ENCODE measurements at regions of chr1 and their contacts with region 1.

Region 1: DNA sequence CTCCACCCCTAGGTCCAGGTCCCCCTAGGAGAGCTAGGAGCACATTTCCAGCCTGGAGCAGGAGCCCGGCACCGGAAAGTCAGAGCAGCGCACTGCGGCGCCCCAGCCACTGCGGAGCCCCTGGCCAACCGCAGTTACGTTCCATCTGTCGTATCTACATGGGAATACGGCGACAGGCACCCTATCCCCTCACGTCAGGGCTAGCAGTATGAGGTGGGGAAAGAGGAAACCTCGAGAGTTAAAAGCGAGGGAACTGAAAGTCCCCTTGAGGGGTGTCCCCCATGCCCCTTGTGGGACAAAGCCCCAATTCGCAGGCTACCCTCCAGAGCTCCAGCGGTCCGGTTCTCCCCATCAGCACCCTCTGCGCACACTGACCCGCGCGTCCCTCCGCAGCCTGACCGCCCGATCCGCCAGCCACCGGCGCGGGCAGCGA is 995 bp downstream of the COLGALT2 start:
- DNase-seq: no peak
- H3K4me3 ChIP-seq: peak overlapping the region; percentile 64
- CTCF ChIP-seq: no peak

Region 2: GRCh38 chr1:184025242-184025675 is 11.3 kb before region 1 on chr1:
- CTCF ChIA-PET with region 1: no interaction called
- POLR2A ChIA-PET with region 1: no interaction called
- DNase-seq: peak; percentile 76
- H3K4me3 ChIP-seq: no peak overlapping the region
- CTCF ChIP-seq: no peak

Region 3: DNA sequence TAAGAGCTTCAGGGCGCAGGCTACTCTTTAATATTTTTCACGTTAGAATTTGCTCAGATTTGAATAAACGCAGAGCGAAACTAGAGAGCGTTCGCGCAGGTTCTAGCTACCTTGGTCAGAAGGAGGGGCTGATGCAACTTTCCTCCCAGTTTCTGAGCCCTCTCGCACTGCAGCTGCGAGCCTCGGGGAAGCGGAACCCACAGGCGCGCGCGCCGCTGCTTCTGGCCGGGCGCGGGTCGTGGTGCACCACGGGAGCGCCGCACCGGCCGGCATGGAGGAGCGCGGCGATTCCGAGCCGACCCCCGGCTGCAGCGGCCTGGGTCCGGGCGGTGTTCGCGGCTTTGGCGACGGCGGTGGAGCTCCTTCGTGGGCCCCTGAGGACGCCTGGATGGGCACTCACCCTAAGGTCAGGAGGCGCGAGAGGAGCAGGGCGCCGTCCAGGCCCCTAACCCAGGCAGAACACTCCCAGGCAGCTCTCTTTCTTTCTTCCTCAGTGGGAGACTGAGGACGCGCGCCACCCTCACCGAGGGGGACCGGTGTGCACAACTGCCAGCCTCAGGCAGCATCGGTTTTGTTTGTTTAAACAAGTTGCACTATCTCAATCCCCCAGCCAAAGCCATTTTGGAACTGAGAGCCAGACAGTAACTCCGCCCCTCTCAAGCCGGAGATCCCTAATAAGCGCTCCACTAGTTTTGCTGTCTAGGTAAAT is 15.1 kb after region 1 on chr1 and contains the start of gene TSEN15:
- CTCF ChIA-PET with region 1: interaction called, 5 read pairs
- POLR2A ChIA-PET with region 1: interaction called, 11 read pairs
- DNase-seq: no peak
- H3K4me3 ChIP-seq: peak within 1 kb of the TSS; percentile 81
- CTCF ChIP-seq: no peak

Region 4: DNA sequence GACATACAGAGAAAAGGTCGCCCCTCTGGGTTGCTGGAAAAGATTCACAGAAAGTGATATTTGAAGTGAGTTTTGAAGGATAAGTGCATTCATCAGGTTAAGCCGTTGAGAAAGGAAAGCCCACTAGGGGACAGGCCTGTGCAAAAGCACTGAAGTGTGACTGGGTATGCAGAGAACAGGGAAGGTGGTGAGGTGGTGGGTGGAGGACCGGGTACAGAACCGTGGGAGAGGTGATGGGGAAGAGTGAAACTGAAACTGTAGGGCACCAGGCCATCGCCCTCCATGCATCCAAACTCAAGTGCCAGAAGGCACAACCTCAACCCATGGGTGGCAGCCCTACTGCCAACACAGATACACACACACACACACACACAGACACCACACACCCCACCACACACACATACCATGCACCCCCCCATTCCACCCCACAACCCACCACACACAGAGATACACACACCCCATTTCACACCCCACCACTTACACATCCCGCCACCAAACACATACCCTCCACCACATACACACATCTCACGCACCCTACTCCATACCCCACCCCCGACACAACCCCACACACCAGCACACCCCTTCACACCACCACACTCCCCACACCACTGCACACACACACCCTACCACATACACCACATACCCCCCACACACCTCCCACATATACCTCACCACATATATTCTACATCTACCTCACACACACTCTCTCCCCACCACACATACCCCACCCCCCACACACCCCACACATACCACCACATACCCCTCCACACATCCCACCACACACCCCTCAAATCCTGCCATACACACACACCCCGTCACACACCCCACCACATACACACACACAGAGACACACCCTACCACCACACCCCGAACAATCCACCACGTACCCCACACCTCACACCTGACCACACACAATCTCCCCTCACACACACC is 74.0 kb after region 1 on chr1:
- CTCF ChIA-PET with region 1: no interaction called
- POLR2A ChIA-PET with region 1: no interaction called
- DNase-seq: no peak
- H3K4me3 ChIP-seq: no peak overlapping the region
- CTCF ChIP-seq: no peak

Region 5: GRCh38 chr1:184199438-184200085 is 163.0 kb after region 1 on chr1:
- CTCF ChIA-PET with region 1: no interaction called
- POLR2A ChIA-PET with region 1: no interaction called
- DNase-seq: no peak
- H3K4me3 ChIP-seq: no peak overlapping the region
- CTCF ChIP-seq: no peak